ENCODE measurements at regions of chr5 and their contacts with region 1.

Region 1: DNA sequence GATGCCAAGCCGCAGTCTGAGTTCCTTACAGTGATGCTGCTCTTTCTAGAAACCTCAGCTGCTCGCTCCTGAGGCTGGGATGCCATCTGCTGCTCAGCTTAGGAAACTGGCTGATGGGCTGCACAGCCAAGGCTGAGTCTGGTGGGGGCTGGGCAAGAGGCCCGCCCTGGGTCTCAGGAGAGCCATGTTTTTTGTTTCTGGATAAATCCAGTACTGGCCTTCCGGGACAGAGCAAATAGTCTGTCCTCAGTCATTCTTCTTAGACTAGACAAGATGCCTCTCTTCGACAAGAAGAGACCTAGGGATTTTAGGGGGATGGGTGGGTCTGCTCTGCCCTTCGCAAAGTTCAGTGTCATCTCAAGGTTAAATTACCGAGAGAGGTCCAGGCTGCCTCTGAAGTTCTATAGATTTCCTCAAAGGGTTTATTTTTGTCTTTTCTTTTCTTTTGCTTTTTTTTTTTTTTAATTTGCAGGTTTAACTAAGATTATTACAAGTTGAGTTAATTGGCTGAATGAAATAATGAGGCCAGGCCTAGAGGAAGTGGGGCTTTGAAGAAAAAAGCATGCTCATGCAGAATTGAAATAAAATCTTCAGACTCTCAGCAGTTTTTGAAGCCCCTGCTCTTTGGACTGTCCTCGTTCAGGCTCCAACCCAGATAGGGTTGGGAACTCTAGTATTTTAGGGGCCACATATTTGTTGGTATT is 30.6 kb upstream of the MATR3 start:
- DNase-seq: peak; percentile 78
- CTCF ChIP-seq: peak; percentile 82

Region 2: GRCh38 chr5:138641547-138642298 is 621.2 kb before region 1 on chr5:
- in situ Hi-C with region 1: loop called (anchors 10 kb)
- DNase-seq: peak; percentile 73
- CTCF ChIP-seq: peak; percentile 63